PC-9 (cell line): ENCODE measurements at regions of chr2 and their contacts with region 1.

Region 1: DNA sequence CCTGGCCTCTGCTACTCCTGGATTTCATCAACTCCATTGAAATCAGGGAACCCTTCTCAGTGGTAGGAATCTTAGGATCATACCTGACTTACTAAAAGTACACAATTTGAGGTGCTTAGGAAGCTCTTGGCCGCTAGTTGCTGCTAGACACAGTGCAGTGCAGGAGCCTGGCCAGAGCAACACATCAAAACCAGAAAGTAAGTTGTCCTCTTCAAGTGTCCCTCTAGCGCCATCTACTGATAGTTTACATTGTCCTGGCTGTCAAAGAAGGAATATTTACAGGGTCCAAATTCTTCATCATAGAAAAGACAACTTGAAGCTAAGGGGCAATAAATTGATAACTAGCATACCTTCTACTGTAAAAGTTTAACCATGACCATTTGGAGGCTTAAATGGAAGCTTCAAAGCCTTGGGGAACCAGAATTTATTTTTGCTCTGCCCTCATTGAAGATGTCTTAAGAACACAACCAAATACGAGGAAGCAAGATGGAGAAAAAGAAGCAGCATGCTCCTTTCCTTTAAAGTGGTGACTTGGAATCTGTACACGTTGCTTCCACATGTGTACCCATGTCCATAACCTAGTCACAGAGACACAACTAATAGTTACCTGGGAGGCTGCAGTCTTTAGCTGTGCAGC is 889.1 kb upstream of the GCFC2 start:
- DNase-seq: peak; percentile 24 to 74
- H3K4me3 ChIP-seq: no peak overlapping the region
- H3K27ac ChIP-seq: no peak overlapping the region
- H3K4me1 ChIP-seq: no peaks in the 10 kb centered on the region
- H3K27me3 ChIP-seq: no peaks in the 10 kb centered on the region
- CTCF ChIP-seq: peak; percentile 87

Region 2: DNA sequence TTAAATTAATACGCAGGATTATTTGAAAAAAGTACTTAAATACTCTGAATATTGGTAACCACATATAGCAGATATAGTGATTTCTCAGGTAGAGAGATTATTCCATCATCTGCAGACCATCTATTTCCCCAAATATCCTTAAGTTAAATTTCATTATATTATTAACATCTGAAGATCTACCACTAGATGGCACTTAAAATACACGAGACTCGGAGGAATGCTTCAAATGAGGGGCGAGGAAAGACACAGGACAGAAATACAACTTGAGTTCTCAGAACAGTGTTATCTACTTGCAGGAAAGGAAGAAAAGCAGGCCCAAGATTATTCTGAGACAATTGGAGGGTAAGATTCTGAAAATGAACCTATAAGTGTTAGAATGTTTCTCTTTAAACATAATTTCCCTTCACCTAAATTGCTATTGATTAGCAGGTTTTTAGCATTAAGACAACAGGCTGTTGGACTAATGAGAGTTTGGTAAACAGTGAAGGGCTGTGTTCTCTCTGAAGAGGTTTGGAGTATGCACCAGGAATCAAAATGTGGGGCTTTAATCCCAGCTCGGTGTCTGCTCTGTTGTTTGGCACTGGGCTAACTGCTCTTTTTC is 812.2 kb before region 1 on chr2:
- CTCF ChIA-PET with region 1: no interaction called
- POLR2A ChIA-PET with region 1: no interaction called
- intact Hi-C with region 1: loop called (anchors 2 kb)
- DNase-seq: no peak
- H3K4me3 ChIP-seq: no peak overlapping the region
- H3K27ac ChIP-seq: no peak overlapping the region
- H3K4me1 ChIP-seq: no peaks in the 10 kb centered on the region
- H3K27me3 ChIP-seq: peaks cover 8% of the 10 kb centered on the region; the same call in 1 of the 2 replicates
- CTCF ChIP-seq: peak; percentile 77

Region 3: GRCh38 chr2:76197842-76198448 is 401.9 kb before region 1 on chr2:
- CTCF ChIA-PET with region 1: no interaction called
- POLR2A ChIA-PET with region 1: no interaction called
- intact Hi-C with region 1: loop called (anchors 10 kb)
- DNase-seq: peak in 1 of 2 experiments; percentile 23
- H3K4me3 ChIP-seq: no peak overlapping the region
- H3K27ac ChIP-seq: no peak overlapping the region
- H3K4me1 ChIP-seq: no peaks in the 10 kb centered on the region
- H3K27me3 ChIP-seq: no peaks in the 10 kb centered on the region
- CTCF ChIP-seq: peak; percentile 89